Activated naive CD4-positive, alpha-beta T cell treated with anti-CD3 and anti-CD28 coated beads for 36 hours (primary cell): ENCODE measurements at regions of chr3 and their contacts with region 1.

Region 1: DNA sequence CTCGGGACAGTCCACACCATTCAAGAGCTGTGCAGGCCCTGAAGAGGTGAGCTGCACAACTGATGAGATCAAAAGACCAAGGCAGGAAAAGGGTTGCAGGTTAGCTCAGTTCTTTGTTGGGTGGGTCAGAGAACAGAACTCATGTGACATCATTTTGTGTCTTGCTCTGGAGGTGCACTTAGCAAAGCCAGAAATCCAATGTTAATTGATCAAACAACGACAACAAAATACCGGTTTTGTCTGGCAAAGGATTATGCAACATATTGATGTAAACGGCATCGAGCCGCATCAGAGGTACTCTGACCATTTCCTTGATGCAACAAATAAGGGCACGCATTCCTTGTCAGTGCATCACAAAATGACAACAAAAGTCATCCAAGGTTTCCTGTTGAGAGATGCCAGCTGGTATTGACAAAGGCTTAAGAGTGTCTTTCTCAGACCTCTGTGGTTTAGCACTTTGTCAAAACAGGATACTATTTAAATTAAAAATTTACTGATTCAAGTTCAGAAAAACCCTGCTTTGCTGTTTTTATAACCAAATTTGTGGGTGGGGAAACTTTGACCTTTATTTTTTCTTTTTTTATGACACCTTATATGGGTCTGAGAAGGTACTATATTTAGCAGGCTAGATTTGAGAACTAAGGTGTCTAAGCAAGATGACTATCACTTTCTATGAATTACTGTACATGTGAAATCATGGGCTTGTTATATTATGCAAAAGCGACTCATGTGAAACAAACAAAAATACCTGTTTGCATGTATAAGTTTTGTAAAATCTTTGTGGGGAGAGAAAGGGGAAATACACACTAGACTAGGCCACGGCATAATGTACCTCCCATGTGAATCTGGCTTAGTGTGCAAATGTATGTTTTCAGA is 496.1 kb downstream of the FOXP1 start:
- DNase-seq: peak; percentile 69
- H3K4me3 Mint-ChIP-seq: peak overlapping the region; percentile 14
- H3K27ac Mint-ChIP-seq: peak overlapping the region; percentile 88
- H3K4me1 Mint-ChIP-seq: peaks cover 89% of the 10 kb centered on the region
- H3K27me3 Mint-ChIP-seq: no peaks in the 10 kb centered on the region

Region 2: DNA sequence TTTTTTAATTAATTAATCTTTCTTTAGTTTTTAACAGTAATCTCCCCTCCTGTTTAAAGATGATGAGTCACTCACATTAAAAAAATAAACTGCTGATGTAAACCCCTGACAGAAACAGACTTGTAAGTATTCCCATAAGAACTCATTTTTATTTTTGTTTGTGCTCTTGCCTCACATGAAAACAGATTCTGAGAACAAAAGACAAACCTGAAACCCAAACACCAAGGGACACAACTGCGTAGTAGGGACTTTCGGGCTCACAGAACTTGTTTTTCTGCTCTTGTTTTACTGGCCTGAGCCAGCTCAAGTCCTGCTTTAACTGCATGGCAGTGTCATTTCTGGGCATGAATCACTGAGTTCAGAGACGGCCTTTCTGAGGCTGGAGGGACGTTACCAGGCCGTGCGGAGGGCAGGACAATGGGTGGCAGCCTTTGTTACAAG is 104.7 kb before region 1 on chr3:
- CTCF ChIA-PET with region 1: no interaction called
- intact Hi-C with region 1: no loop called
- DNase-seq: peak; percentile 66
- H3K4me3 Mint-ChIP-seq: no peak overlapping the region
- H3K27ac Mint-ChIP-seq: peak overlapping the region; percentile 96
- H3K4me1 Mint-ChIP-seq: peaks cover 74% of the 10 kb centered on the region
- H3K27me3 Mint-ChIP-seq: no peaks in the 10 kb centered on the region

Region 3: DNA sequence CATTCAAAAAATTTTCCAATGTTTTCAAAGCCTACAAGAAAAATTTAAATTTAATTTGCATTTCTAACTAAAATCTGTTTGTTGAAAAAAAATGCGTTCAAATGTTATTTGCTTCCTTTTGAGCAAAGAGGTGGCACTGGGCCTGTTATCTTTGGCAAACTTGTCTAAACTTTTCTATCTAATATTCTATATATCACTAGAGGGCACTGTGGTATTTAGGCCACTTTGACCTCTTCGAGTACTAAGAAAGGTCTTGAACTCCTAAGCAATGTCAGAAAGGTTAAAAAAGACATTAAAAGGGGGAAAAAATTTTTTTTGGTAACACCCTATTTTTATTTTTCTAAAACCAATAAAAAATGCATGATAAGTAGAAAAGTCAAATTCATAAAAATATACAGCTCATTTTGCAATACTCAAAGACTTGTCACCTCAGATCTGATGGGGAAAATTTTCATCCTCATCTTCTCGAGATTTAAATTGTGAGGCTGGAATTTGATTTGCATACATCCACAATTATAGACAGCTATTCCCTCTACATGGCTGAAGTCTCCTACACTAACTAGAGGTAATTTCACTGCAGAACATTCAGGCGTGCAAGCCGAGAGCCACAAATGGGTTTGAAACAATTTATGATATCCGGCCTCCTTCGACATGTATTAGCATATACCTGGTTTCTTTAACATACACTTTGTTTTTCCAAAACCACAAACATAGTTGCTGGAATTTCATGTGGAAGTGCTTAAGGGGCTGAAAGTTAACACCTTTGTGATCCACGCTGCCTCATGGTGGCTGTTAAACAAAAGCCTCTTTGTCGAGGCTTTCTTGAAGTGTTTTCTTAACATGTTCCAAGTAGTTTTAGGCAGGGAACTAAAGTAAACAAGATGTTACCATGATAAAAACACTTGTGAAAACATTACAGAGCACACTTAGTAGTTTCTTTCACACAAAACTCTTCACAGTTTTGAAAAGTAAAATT is 80.3 kb before region 1 on chr3:
- CTCF ChIA-PET with region 1: interaction called, 4 read pairs
- intact Hi-C with region 1: loop called (anchors 1 kb)
- DNase-seq: no peak
- H3K4me3 Mint-ChIP-seq: no peak overlapping the region
- H3K27ac Mint-ChIP-seq: peak overlapping the region; percentile 71
- H3K4me1 Mint-ChIP-seq: peaks cover 77% of the 10 kb centered on the region
- H3K27me3 Mint-ChIP-seq: no peaks in the 10 kb centered on the region

Region 4: GRCh38 chr3:71099997-71100719 is 12.8 kb after region 1 on chr3:
- CTCF ChIA-PET with region 1: interaction called, 4 read pairs
- intact Hi-C with region 1: loop called (anchors 1 kb)
- DNase-seq: no peak
- H3K4me3 Mint-ChIP-seq: peak overlapping the region; percentile 3
- H3K27ac Mint-ChIP-seq: peak overlapping the region; percentile 73
- H3K4me1 Mint-ChIP-seq: peaks cover 89% of the 10 kb centered on the region
- H3K27me3 Mint-ChIP-seq: no peaks in the 10 kb centered on the region

Region 5: DNA sequence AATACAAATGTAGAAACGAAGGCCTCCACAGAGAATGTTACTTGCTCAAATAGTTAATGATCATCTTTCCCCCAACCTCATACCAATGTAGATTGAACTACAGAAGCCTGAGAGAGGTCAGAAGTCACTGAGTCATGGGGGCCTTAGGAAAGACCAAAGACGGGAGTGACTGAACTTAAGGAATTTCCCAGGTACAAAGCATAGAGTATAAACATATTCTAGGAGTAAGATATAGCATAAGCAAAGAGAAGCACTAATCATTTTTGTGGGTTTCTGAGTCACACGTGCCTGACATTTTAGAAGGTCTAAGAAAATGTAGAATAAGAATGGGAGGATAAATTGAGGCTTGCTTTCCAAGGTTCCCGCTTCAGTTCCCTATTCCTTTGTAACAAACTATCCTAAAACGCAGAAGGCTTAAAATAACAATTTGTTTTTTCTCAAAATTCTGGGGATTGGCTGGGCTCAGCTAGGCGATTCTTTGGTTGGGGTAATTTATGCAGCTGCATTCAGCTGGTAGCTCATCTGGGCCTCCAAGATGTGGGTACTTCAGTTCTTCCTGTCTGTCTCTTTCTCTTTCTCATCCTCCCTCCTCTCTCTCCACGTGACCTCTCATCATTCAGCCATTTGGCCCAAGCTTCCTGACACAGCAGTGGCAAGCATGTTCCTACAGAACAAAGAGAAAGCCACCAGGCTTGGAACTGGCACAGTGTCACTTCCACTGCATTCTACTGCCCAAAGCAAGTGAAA is 73.6 kb after region 1 on chr3:
- CTCF ChIA-PET with region 1: no interaction called
- intact Hi-C with region 1: loop called (anchors 1 kb)
- DNase-seq: peak; percentile 44
- H3K4me3 Mint-ChIP-seq: peak overlapping the region; percentile 33
- H3K27ac Mint-ChIP-seq: peak overlapping the region; percentile 88
- H3K4me1 Mint-ChIP-seq: peaks cover 79% of the 10 kb centered on the region
- H3K27me3 Mint-ChIP-seq: no peaks in the 10 kb centered on the region

Region 6: GRCh38 chr3:71172951-71173350 is 85.6 kb after region 1 on chr3:
- CTCF ChIA-PET with region 1: no interaction called
- intact Hi-C with region 1: no loop called
- DNase-seq: no peak
- H3K4me3 Mint-ChIP-seq: no peak overlapping the region
- H3K27ac Mint-ChIP-seq: no peak overlapping the region
- H3K4me1 Mint-ChIP-seq: peaks cover 68% of the 10 kb centered on the region
- H3K27me3 Mint-ChIP-seq: no peaks in the 10 kb centered on the region

Region 7: GRCh38 chr3:71369701-71370391 is 282.5 kb after region 1 on chr3:
- CTCF ChIA-PET with region 1: no interaction called
- intact Hi-C with region 1: no loop called
- DNase-seq: no peak
- H3K4me3 Mint-ChIP-seq: no peak overlapping the region
- H3K27ac Mint-ChIP-seq: no peak overlapping the region
- H3K4me1 Mint-ChIP-seq: peaks cover 74% of the 10 kb centered on the region
- H3K27me3 Mint-ChIP-seq: no peaks in the 10 kb centered on the region

Region 8: GRCh38 chr3:71380096-71380495 is 292.7 kb after region 1 on chr3:
- CTCF ChIA-PET with region 1: no interaction called
- intact Hi-C with region 1: loop called (anchors 1 kb)
- DNase-seq: no peak
- H3K4me3 Mint-ChIP-seq: no peak overlapping the region
- H3K27ac Mint-ChIP-seq: peak overlapping the region; percentile 69
- H3K4me1 Mint-ChIP-seq: peaks cover 88% of the 10 kb centered on the region
- H3K27me3 Mint-ChIP-seq: no peaks in the 10 kb centered on the region

Region 9: GRCh38 chr3:71495708-71496472 is 408.5 kb after region 1 on chr3:
- CTCF ChIA-PET with region 1: no interaction called
- intact Hi-C with region 1: loop called (anchors 2 kb)
- DNase-seq: peak; percentile 43
- H3K4me3 Mint-ChIP-seq: peak overlapping the region; percentile 49
- H3K27ac Mint-ChIP-seq: peak overlapping the region; percentile 73
- H3K4me1 Mint-ChIP-seq: peaks cover 83% of the 10 kb centered on the region
- H3K27me3 Mint-ChIP-seq: no peaks in the 10 kb centered on the region